Activated T-helper 2 cell treated with anti-CD3 and anti-CD28 coated beads, Interferon-gamma antibody, Interleukin-2, Interleukin-4, amounts not matched to agents 10 μg/mL and 5 μg/mL and 100 μg/mL, durations not matched to agents 14 hours and 24 hours and 36 hours (primary cell): ENCODE measurements at regions of chr4 and their contacts with region 1.

Region 1: DNA sequence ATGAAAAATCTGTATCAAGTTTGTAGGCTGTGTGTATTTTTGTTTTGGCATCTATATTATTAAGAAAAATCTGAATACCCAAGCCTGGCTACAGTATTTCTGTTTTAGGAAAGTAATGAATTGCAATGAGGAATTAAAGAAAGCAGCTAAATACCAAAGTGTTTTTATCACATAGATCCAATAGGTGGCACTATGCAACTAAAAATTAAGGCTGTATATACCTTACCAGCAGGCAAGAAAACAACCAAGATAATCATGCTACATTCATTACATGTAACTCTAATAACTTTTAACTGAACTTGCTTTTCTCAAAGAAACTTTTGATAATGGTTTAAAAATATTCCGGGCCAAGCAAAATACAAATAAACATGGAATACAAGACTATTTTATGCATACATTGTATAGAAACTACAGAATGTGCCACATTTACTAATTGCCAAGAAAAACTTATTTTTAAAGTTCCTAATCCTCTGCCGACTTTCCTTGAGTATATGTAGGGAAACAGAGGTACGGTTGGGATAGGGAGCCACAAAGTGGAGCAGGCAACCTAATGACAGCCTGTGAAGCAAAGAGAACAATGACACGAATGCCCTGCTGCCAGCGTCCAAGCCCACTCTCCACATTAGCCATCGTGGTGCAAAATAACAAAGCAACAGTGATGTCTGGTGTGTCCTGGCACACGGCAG is 63.7 kb downstream of the SEC24D start:
- DNase-seq: no peak
- H3K4me3 Mint-ChIP-seq: no peak overlapping the region
- H3K27ac Mint-ChIP-seq: no peak overlapping the region
- H3K4me1 Mint-ChIP-seq: no peaks in the 10 kb centered on the region
- H3K27me3 Mint-ChIP-seq: no peaks in the 10 kb centered on the region

Region 2: DNA sequence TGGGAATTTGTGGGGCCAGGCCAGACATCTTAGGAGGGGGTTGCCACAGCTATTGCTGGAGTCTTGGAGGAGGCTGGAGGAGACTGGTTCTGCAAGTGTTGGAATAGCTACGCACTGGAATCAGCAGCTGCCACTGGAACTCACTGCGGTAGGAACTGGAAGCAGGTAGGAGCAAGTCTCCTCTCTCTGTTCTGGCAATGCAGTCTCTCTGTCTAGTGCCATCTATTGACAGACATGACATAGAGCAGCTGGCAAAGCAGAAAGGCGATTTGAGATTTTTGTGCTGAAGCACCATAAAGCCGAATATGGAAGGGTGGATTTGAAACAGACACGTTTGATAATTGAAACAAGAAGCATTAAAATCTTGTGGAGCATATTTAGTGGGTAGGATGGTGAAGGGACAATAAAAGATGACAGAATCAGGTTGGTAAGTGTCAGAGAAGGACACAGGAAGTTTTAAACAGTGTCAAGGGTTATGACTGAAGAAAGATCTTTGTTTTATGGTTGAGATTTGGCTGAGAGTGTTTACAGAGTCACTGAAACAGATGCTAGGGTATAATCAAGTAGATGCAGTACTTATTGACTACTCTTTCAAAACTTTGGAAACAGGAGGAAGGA is 93.0 kb after region 1 on chr4:
- intact Hi-C with region 1: loop called (anchors 1 kb)
- DNase-seq: no peak
- H3K4me3 Mint-ChIP-seq: no peak overlapping the region
- H3K27ac Mint-ChIP-seq: no peak overlapping the region
- H3K4me1 Mint-ChIP-seq: no peaks in the 10 kb centered on the region
- H3K27me3 Mint-ChIP-seq: peaks cover 10% of the 10 kb centered on the region

Region 3: DNA sequence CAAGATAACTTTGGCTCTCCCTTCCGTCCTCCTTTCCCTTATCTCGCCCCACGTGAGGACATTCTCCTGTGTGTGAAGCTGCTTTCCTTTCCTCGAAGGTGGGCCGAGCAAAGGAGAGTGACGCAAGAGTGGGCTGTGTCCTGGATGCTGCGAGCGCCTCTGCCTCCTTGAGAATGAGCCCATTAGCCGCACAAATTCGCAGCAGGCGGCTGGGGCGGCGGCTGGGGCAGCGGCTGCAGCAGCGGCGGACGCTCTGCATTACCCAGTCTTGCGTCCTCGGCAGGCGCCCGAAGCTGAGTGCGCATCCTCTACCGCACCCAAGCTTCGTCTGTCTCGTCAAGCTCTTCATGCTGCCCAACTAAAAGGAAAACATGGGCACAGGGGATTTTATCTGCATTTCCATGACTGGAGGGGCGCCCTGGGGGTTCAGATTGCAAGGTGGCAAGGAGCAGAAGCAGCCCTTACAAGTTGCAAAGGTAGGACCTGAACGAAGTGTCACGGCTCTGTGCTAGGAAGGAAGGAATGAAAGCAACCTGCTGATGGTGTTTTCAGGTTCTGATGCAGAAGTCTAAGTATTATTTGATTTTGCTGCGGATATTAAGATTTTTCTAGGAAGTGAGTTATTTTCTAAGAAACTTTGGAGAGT is 116.6 kb after region 1 on chr4 and contains the start of gene SYNPO2:
- intact Hi-C with region 1: loop called (anchors 1 kb)
- DNase-seq: peak; percentile 19
- H3K4me3 Mint-ChIP-seq: peak within 1 kb of the TSS; percentile 75
- H3K27ac Mint-ChIP-seq: no peak within 1 kb of the TSS
- H3K4me1 Mint-ChIP-seq: peaks cover 16% of the 10 kb centered on the region
- H3K27me3 Mint-ChIP-seq: peaks cover 32% of the 10 kb centered on the region
- total RNA-seq, gene SYNPO2: 0.09 TPM in 2 replicates

Region 4: GRCh38 chr4:118974758-118975157 is 202.5 kb after region 1 on chr4:
- intact Hi-C with region 1: loop called (anchors 10 kb)
- DNase-seq: no peak
- H3K4me3 Mint-ChIP-seq: no peak overlapping the region
- H3K27ac Mint-ChIP-seq: no peak overlapping the region
- H3K4me1 Mint-ChIP-seq: no peaks in the 10 kb centered on the region
- H3K27me3 Mint-ChIP-seq: peaks cover 7% of the 10 kb centered on the region